ENCODE measurements at regions of chrX and their contacts with region 1.

Region 1: DNA sequence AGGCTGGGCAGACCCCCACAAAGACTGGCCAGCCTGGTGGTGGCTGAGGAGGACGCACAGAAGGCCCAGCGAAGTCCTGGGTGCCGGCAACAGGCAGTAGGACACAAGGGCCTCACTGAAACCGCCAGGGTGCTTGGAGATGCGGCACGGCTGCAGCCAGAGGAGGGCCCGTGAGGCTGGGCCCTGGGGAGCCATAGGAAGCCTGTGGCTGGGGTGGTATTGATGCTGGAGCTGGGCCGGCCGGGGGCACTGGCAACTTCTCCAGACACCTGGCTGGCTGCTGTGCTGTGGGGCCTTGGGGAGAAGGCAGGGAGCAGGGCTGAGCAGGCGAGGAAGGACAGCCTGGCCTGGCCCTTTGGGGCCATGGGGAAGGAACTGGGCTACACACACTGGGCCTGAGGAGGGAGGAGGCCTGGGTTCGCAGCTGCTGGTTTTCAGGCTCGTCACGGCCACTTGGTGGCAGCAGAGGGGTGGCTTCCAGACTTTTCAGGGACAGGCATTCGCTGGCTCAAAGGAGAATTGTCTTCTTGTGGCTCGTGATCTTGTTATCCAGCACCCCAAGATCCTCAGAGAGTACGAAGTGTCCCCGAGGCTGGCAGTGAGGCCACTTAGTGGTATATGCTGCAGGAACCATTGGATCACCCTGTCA is 37.2 kb downstream of the ATP2B3 start:
- DNase-seq: peak; percentile 26 to 71 (median 57)
- ATAC-seq: peak; percentile 78
- H3K4me3 ChIP-seq: no peak overlapping the region
- H3K4me3 Mint-ChIP-seq: no peak overlapping the region
- H3K27ac ChIP-seq: no peak overlapping the region
- H3K27ac Mint-ChIP-seq: no peak overlapping the region
- H3K4me1 ChIP-seq: no peaks in the 10 kb centered on the region
- H3K4me1 Mint-ChIP-seq: peaks cover 0 to 3% (median 0%) of the 10 kb centered on the region in 7 donors
- H3K27me3 ChIP-seq: no peaks in the 10 kb centered on the region
- H3K27me3 Mint-ChIP-seq: no peaks in the 10 kb centered on the region

Region 2: DNA sequence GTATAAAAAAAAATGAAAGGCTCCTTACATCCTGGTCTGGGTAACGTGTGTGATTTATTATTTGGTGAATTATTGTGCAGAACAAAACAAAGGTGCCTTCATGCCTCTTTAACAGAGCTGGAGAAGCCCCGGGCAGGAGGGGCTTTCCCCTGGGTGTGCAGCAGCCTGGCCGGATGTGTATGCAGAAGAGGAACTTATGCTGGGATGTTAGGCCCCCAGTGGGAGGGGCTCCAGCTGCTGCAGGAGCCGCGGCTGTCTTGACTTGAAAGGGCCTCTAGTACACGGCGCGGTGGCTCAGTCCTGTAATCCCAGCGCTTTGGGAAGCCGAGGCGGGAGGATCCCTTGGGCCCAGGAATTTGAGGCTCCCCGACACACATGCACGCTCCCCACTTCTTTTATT is 28.3 kb after region 1 on chrX:
- CTCF ChIA-PET with region 1: no interaction called
- POLR2A ChIA-PET with region 1: no interaction called
- intact Hi-C with region 1: loop called in 1 of 2 experiments (anchors 1 kb)
- DNase-seq: peak; percentile 33 to 73 (median 65)
- ATAC-seq: peak; percentile 100
- H3K4me3 ChIP-seq: peak overlapping the region; percentile 20
- H3K4me3 Mint-ChIP-seq: peak overlapping the region; percentile 59 to 88 (median 72)
- H3K27ac ChIP-seq: peak overlapping the region; percentile 41
- H3K27ac Mint-ChIP-seq: peak overlapping the region; percentile 72 to 85 (median 79)
- H3K4me1 ChIP-seq: peaks cover 0 to 14% of the 10 kb centered on the region in 2 donors
- H3K4me1 Mint-ChIP-seq: peaks cover 10 to 39% (median 25%) of the 10 kb centered on the region in 7 donors
- H3K27me3 ChIP-seq: no peaks in the 10 kb centered on the region
- H3K27me3 Mint-ChIP-seq: no peaks in the 10 kb centered on the region

Region 3: GRCh38 chrX:153649178-153649914 is 94.7 kb after region 1 on chrX:
- CTCF ChIA-PET with region 1: interaction called, 5 read pairs
- POLR2A ChIA-PET with region 1: no interaction called
- intact Hi-C with region 1: loop called (anchors 1 to 5 kb)
- DNase-seq: peak in 4 of 9 donors; percentile 19 to 33 (median 30)
- ATAC-seq: peak; percentile 83
- H3K4me3 ChIP-seq: no peak overlapping the region
- H3K4me3 Mint-ChIP-seq: peak overlapping the region in 1 of 10 donors; percentile 51
- H3K27ac ChIP-seq: no peak overlapping the region
- H3K27ac Mint-ChIP-seq: no peak overlapping the region
- H3K4me1 ChIP-seq: no peaks in the 10 kb centered on the region
- H3K4me1 Mint-ChIP-seq: peaks cover 0 to 4% (median 0%) of the 10 kb centered on the region in 7 donors
- H3K27me3 ChIP-seq: peaks cover 0 to 4% of the 10 kb centered on the region in 2 donors
- H3K27me3 Mint-ChIP-seq: peaks cover 0 to 36% (median 5%) of the 10 kb centered on the region in 5 donors

Region 4: DNA sequence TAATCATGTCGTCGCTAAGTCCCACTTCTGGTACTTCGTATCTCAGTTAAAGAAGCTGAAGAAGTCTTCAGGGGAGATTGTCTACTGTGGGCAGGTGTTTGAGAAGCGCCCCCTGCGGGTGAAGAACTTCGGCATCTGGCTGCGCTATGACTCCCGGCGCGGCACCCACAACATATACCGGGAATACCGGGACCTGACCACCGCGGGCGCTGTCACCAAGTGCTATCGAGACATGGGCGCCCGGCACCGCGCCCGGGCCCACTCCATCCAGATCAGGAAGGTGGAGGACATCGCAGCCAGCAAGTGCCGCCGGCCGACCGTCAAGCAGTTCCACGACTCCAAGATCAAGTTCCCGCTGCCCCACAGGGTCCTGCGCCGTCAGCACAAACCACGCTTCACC is 107.6 kb after region 1 on chrX:
- CTCF ChIA-PET with region 1: interaction called, 27 read pairs
- POLR2A ChIA-PET with region 1: no interaction called
- intact Hi-C with region 1: loop called (anchors 1 kb)
- DNase-seq: peak in 8 of 9 donors; percentile 26 to 58 (median 52)
- ATAC-seq: no peak
- H3K4me3 ChIP-seq: no peak overlapping the region
- H3K4me3 Mint-ChIP-seq: peak overlapping the region in 9 of 10 donors; percentile 42 to 73 (median 55)
- H3K27ac ChIP-seq: no peak overlapping the region
- H3K27ac Mint-ChIP-seq: no peak overlapping the region
- H3K4me1 ChIP-seq: no peaks in the 10 kb centered on the region
- H3K4me1 Mint-ChIP-seq: peaks cover 0 to 6% (median 0%) of the 10 kb centered on the region in 7 donors
- H3K27me3 ChIP-seq: no peaks in the 10 kb centered on the region
- H3K27me3 Mint-ChIP-seq: peaks cover 0 to 46% (median 6%) of the 10 kb centered on the region in 5 donors

Region 5: DNA sequence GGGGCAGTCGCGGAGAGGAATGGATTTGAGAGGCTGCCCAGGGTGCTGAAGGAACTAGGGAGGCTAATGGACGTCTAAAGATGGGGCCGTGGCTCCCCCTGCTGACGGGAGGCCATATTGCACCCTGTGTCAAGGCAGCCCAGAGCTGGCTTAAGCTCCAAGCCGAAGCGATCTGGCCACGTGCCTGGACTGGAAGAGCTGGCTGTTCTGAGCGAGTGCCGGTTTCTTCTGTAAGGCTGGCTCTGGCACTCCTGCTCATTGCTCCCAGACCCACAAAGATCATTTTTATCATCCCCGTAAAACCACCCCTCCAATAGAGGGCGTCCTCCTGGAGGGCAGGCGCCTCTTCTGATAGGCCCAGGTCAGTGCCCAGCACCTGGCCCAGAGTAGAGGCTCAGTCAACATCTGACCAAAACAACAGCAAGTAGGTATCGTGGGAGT is 113.3 kb after region 1 on chrX:
- CTCF ChIA-PET with region 1: interaction called, 27 read pairs
- POLR2A ChIA-PET with region 1: no interaction called
- intact Hi-C with region 1: loop called (anchors 1 kb)
- DNase-seq: peak; percentile 51 to 78 (median 65)
- ATAC-seq: peak; percentile 93
- H3K4me3 ChIP-seq: no peak overlapping the region
- H3K4me3 Mint-ChIP-seq: peak overlapping the region; percentile 53 to 82 (median 74)
- H3K27ac ChIP-seq: no peak overlapping the region
- H3K27ac Mint-ChIP-seq: peak overlapping the region in 4 of 9 donors; percentile 2 to 51 (median 37)
- H3K4me1 ChIP-seq: no peaks in the 10 kb centered on the region
- H3K4me1 Mint-ChIP-seq: peaks cover 5 to 10% (median 7%) of the 10 kb centered on the region in 7 donors
- H3K27me3 ChIP-seq: no peaks in the 10 kb centered on the region
- H3K27me3 Mint-ChIP-seq: peaks cover 0 to 28% (median 7%) of the 10 kb centered on the region in 5 donors

Region 6: DNA sequence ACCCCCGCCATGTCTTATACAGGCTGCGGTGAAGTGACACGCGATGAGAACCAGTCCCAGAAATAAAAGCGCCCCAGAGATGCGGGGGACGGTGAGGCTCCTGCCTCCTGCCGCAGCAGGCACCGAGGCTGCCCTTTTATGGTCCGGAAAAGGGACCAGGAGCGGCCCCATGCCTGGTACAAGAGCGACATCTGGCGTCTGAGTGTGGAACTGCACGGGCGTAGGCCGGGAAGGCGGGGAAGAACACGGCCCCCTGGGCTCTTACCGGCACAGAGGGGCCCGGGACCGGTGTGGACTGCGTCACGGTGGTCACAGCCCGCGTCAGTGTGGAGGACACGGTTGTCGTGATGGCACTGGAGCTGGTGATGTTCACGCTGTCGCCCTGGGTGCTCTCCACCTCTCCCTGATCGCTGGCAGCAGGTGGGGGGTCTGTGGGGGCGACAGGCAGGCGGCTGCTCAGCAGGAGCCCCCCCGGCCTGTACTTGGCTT is 398.7 kb after region 1 on chrX:
- CTCF ChIA-PET with region 1: no interaction called
- POLR2A ChIA-PET with region 1: no interaction called
- intact Hi-C with region 1: loop called in 1 of 2 experiments (anchors 5 kb)
- DNase-seq: peak; percentile 61 to 87 (median 78)
- ATAC-seq: peak; percentile 89
- H3K4me3 ChIP-seq: no peak overlapping the region
- H3K4me3 Mint-ChIP-seq: no peak overlapping the region
- H3K27ac ChIP-seq: no peak overlapping the region
- H3K27ac Mint-ChIP-seq: peak overlapping the region in 6 of 9 donors; percentile 4 to 82 (median 52)
- H3K4me1 ChIP-seq: peaks cover 4 to 6% of the 10 kb centered on the region in 2 donors
- H3K4me1 Mint-ChIP-seq: peaks cover 0 to 22% (median 7%) of the 10 kb centered on the region in 7 donors
- H3K27me3 ChIP-seq: no peaks in the 10 kb centered on the region
- H3K27me3 Mint-ChIP-seq: no peaks in the 10 kb centered on the region

Measured in naive thymus-derived CD4-positive, alpha-beta T cell (primary cell).